Activated naive CD4-positive, alpha-beta T cell treated with anti-CD3 and anti-CD28 coated beads for 36 hours (primary cell): ENCODE measurements at regions of chr2 and their contacts with region 1.

Region 1: DNA sequence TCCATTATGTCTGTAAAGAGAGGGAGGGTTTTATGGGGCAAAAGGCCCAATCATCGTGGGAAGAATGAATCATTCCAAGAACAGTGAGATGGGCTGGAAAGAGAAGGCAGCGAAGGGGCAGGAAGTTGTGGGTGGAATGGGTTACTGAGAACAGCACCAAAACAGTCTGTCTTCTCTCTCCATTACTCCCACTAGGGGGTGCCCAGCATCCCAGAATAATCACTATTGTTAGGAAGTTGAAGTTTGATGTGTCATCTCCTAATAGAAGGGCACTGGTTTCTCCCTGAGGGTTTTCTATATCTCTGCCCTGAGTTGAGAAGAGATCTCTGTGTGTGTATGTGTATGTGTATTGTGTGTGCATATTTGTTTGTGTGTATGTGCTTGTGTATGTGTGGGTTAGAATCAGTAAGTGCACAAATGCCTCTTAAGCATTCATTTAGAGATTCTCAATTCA is 76.6 kb upstream of the MAP4K3 start:
- DNase-seq: peak; percentile 89
- H3K4me3 Mint-ChIP-seq: no peak overlapping the region
- H3K27ac Mint-ChIP-seq: peak overlapping the region; percentile 6
- H3K4me1 Mint-ChIP-seq: peaks cover 34% of the 10 kb centered on the region
- H3K27me3 Mint-ChIP-seq: no peaks in the 10 kb centered on the region

Region 2: GRCh38 chr2:39216346-39217191 is 297.1 kb before region 1 on chr2:
- CTCF ChIA-PET with region 1: no interaction called
- intact Hi-C with region 1: loop called (anchors 1 kb)
- DNase-seq: peak; percentile 64
- H3K4me3 Mint-ChIP-seq: peak overlapping the region; percentile 57
- H3K27ac Mint-ChIP-seq: peak overlapping the region; percentile 87
- H3K4me1 Mint-ChIP-seq: peaks cover 36% of the 10 kb centered on the region
- H3K27me3 Mint-ChIP-seq: no peaks in the 10 kb centered on the region

Region 3: GRCh38 chr2:39436592-39437510 is 76.8 kb before region 1 on chr2 and contains the start of gene MAP4K3:
- CTCF ChIA-PET with region 1: no interaction called
- intact Hi-C with region 1: loop called (anchors 1 kb)
- DNase-seq: peak; percentile 86
- H3K4me3 Mint-ChIP-seq: peak within 1 kb of the TSS; percentile 87
- H3K27ac Mint-ChIP-seq: peak within 1 kb of the TSS; percentile 83
- H3K4me1 Mint-ChIP-seq: peaks cover 66% of the 10 kb centered on the region
- H3K27me3 Mint-ChIP-seq: no peaks in the 10 kb centered on the region
- total RNA-seq, gene MAP4K3: 10.6 to 12.0 TPM

Region 4: DNA sequence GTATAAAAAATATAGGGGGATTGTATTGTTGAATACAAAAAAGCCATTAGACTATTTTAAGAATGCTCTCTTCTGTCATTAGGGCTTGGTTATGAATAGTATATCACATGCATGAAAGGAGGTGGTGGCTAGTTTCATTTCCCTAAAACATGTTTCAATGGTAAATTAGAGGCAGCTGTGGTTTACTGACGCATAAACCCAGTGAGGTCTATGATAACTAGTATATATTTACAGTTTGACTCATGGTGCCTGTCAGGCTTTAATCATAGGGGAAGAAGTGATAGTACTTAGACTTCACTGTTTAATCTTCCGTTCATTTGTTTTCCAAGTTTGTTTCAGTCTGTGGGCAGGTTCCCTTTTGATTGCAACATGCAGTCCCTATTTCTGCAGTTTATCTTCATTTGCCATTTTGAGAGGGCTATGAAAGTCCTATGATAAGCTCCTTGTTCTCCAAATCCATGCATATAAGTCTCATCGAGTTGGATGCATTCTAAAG is 21.5 kb before region 1 on chr2:
- CTCF ChIA-PET with region 1: interaction called, 8 read pairs
- intact Hi-C with region 1: loop called (anchors 1 kb)
- DNase-seq: peak; percentile 67
- H3K4me3 Mint-ChIP-seq: peak overlapping the region; percentile 37
- H3K27ac Mint-ChIP-seq: peak overlapping the region; percentile 53
- H3K4me1 Mint-ChIP-seq: peaks cover 30% of the 10 kb centered on the region
- H3K27me3 Mint-ChIP-seq: peaks cover 6% of the 10 kb centered on the region

Region 5: DNA sequence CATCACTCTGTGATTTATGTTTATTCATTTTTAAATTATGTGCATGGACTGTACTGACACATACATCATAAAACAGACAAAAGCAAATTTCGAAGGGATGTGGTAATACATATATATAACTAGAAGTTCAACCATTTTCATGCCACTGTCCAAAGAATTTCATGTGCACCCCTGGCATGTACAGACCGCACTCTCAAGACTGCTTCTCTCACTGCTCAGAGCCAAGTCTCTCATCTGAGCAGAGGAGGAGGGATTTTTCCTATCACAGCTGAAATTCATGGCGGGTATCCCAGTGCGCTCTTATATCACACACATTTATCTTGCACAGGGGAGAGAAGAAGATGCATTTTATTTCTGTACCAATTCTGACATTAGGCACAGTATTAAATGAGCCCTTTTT is 157.9 kb after region 1 on chr2:
- CTCF ChIA-PET with region 1: no interaction called
- intact Hi-C with region 1: no loop called
- DNase-seq: no peak
- H3K4me3 Mint-ChIP-seq: no peak overlapping the region
- H3K27ac Mint-ChIP-seq: no peak overlapping the region
- H3K4me1 Mint-ChIP-seq: peaks cover 4% of the 10 kb centered on the region
- H3K27me3 Mint-ChIP-seq: peaks cover 42% of the 10 kb centered on the region

Region 6: DNA sequence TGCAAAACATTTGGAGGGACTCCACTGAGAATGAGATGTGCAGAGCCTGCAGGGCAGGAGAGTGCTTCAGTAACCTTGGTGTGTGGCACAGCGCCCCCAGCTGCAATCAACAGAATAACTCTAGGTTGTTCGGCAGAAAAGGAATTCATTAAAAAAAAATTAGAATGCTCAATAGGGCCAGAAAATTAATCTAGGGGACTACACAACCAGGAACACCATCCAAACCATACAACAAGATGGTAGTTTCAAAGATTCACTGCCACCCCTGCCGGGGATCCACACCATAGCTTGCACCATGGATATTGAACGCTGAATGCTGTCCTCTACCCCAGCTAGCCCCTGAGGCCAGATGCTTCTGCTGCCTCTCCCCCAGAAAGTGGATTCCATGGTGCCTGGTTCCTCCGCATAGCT is 215.3 kb after region 1 on chr2:
- CTCF ChIA-PET with region 1: interaction called, 6 read pairs
- intact Hi-C with region 1: loop called (anchors 1 kb)
- DNase-seq: peak; percentile 63
- H3K4me3 Mint-ChIP-seq: no peak overlapping the region
- H3K27ac Mint-ChIP-seq: no peak overlapping the region
- H3K4me1 Mint-ChIP-seq: peaks cover 2% of the 10 kb centered on the region
- H3K27me3 Mint-ChIP-seq: no peaks in the 10 kb centered on the region

Region 7: GRCh38 chr2:39902103-39902502 is 388.4 kb after region 1 on chr2:
- CTCF ChIA-PET with region 1: no interaction called
- intact Hi-C with region 1: loop called (anchors 2 kb)
- DNase-seq: no peak
- H3K4me3 Mint-ChIP-seq: no peak overlapping the region
- H3K27ac Mint-ChIP-seq: no peak overlapping the region
- H3K4me1 Mint-ChIP-seq: no peaks in the 10 kb centered on the region
- H3K27me3 Mint-ChIP-seq: peaks cover 19% of the 10 kb centered on the region